MCF 10A (cell line): ENCODE measurements at regions of chr12 and their contacts with region 1.

Region 1: DNA sequence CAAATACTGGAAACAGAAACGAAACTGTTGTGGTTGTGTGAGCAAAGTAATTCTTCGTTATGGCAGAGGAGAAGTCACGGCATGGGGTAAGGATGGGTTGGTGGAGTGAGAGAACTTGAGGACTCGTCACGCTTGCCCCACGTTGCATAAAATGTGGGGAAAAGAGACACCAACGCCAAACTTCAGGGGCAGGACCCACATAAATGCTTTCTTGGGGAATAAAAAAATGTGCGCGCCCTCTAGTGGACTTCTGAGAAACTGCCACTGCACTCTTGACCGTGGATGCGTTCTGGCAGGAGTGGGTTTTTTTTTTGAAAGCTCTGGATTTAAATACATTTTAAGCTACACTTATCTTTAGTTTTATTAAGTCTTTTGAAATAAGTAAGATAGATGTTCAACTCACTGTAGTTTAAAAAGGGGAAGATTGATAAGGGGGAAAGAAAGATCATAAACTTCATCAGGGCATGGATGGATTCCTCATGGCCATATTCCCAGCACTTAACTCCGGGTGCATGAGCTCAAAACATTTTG is 4.1 kb upstream of the IGF1 start:
- DNase-seq: peak; percentile 62
- H3K4me3 Mint-ChIP-seq: peak overlapping the region; percentile 67
- H3K27ac Mint-ChIP-seq: peak overlapping the region; percentile 70
- H3K4me1 Mint-ChIP-seq: peaks cover 8% of the 10 kb centered on the region
- H3K27me3 Mint-ChIP-seq: no peaks in the 10 kb centered on the region
- CTCF ChIP-seq: peak; percentile 80

Region 2: GRCh38 chr12:101773650-101774162 is 710.8 kb before region 1 on chr12:
- CTCF ChIA-PET with region 1: no interaction called
- POLR2A ChIA-PET with region 1: no interaction called
- intact Hi-C with region 1: loop called (anchors 5 kb)
- DNase-seq: peak; percentile 76
- H3K4me3 Mint-ChIP-seq: no peak overlapping the region
- H3K27ac Mint-ChIP-seq: peak overlapping the region; percentile 55
- H3K4me1 Mint-ChIP-seq: no peaks in the 10 kb centered on the region
- H3K27me3 Mint-ChIP-seq: no peaks in the 10 kb centered on the region
- CTCF ChIP-seq: peak; percentile 94

Region 3: GRCh38 chr12:101939856-101940265 is 544.6 kb before region 1 on chr12:
- CTCF ChIA-PET with region 1: interaction called, 6 read pairs
- POLR2A ChIA-PET with region 1: no interaction called
- intact Hi-C with region 1: loop called (anchors 1 kb)
- DNase-seq: peak; percentile 81
- H3K4me3 Mint-ChIP-seq: no peak overlapping the region
- H3K27ac Mint-ChIP-seq: no peak overlapping the region
- H3K4me1 Mint-ChIP-seq: peaks cover 23% of the 10 kb centered on the region
- H3K27me3 Mint-ChIP-seq: no peaks in the 10 kb centered on the region
- CTCF ChIP-seq: peak; percentile 77

Region 4: GRCh38 chr12:102163383-102163782 is 321.1 kb before region 1 on chr12:
- CTCF ChIA-PET with region 1: interaction called, 85 read pairs
- POLR2A ChIA-PET with region 1: no interaction called
- intact Hi-C with region 1: no loop called
- DNase-seq: no peak
- H3K4me3 Mint-ChIP-seq: no peak overlapping the region
- H3K27ac Mint-ChIP-seq: no peak overlapping the region
- H3K4me1 Mint-ChIP-seq: no peaks in the 10 kb centered on the region
- H3K27me3 Mint-ChIP-seq: no peaks in the 10 kb centered on the region
- CTCF ChIP-seq: no peak

Region 5: GRCh38 chr12:102300824-102301461 is 183.6 kb before region 1 on chr12:
- CTCF ChIA-PET with region 1: interaction called, 7 read pairs
- POLR2A ChIA-PET with region 1: no interaction called
- intact Hi-C with region 1: loop called (anchors 2 kb)
- DNase-seq: peak; percentile 63
- H3K4me3 Mint-ChIP-seq: no peak overlapping the region
- H3K27ac Mint-ChIP-seq: no peak overlapping the region
- H3K4me1 Mint-ChIP-seq: peaks cover 9% of the 10 kb centered on the region
- H3K27me3 Mint-ChIP-seq: no peaks in the 10 kb centered on the region
- CTCF ChIP-seq: peak; percentile 12

Region 6: DNA sequence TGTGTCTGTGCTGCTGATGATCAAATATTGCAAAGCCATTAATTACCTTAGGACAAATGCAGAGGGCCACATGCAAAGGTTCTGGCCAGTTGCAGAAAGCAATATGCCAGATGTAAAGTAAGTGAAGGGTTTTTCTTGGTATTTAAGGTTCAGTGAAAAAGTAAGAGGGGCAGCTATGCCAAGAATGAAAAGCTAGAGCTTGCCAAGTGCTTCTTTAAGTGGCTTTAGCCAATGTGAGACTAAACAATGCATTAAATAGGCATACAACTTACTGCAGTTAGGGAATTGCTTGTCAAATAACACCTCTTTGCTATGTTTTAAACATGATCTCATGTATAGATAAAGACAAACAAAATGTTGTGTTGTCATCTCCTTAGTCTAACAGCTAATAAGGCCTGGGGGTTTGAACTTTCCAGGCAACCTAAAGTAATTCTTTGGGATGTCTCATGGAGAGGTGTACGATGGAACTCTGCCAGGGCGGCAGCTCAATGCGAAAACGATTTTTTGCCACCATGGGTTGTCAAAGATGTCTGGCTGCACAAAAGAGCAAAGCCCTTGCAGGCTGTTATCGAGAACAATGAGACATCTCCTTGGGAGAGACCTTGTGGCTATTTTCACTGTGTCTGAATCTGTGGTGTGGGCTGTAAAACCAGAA is 16.1 kb before region 1 on chr12:
- CTCF ChIA-PET with region 1: interaction called, 39 read pairs
- POLR2A ChIA-PET with region 1: interaction called, 3 read pairs
- intact Hi-C with region 1: no loop called
- DNase-seq: no peak
- H3K4me3 Mint-ChIP-seq: no peak overlapping the region
- H3K27ac Mint-ChIP-seq: no peak overlapping the region
- H3K4me1 Mint-ChIP-seq: peaks cover 9% of the 10 kb centered on the region
- H3K27me3 Mint-ChIP-seq: no peaks in the 10 kb centered on the region
- CTCF ChIP-seq: no peak

Region 7: GRCh38 chr12:102534899-102535298 is 50.4 kb after region 1 on chr12:
- CTCF ChIA-PET with region 1: no interaction called
- POLR2A ChIA-PET with region 1: no interaction called
- intact Hi-C with region 1: no loop called
- DNase-seq: no peak
- H3K4me3 Mint-ChIP-seq: no peak overlapping the region
- H3K27ac Mint-ChIP-seq: no peak overlapping the region
- H3K4me1 Mint-ChIP-seq: no peaks in the 10 kb centered on the region
- H3K27me3 Mint-ChIP-seq: no peaks in the 10 kb centered on the region
- CTCF ChIP-seq: no peak

Region 8: DNA sequence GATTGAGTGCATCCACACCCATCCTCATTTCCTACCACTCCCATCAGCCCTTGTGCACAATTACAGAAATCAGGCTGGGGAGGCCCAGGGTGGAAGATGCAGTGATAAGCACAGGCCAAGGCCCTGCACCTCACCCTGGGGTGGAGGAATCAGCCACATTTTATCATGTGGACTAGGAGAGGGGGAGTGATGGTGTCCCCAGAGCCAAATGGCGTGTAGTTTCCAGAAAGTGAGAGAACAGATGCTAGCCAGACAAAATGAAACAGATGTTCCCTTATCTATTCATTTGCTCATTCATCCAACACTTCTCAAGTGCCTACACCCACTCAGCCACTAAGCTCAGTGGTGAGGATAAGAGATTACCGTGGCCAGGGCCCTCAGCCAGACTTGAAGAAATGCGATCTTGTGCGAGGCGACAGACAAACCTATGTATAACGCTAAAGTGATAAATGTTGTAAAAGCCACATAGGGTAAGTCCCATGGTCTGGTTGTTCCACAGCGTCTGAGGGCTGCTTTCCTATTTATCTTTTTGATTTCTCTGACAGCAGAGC is 1196.2 kb after region 1 on chr12:
- CTCF ChIA-PET with region 1: no interaction called
- POLR2A ChIA-PET with region 1: no interaction called
- intact Hi-C with region 1: no loop called
- DNase-seq: no peak
- H3K4me3 Mint-ChIP-seq: no peak overlapping the region
- H3K27ac Mint-ChIP-seq: no peak overlapping the region
- H3K4me1 Mint-ChIP-seq: no peaks in the 10 kb centered on the region
- H3K27me3 Mint-ChIP-seq: peaks cover 13% of the 10 kb centered on the region
- CTCF ChIP-seq: no peak